ENCODE measurements at regions of chr11 and their contacts with region 1.

Region 1: GRCh38 chr11:17650127-17650911 is 69.1 kb upstream of the MYOD1 start:
- DNase-seq: no peak
- H3K4me3 ChIP-seq: no peak overlapping the region
- H3K27ac ChIP-seq: no peak overlapping the region
- H3K4me1 ChIP-seq: no peaks in the 10 kb centered on the region
- H3K27me3 ChIP-seq: no peaks in the 10 kb centered on the region
- CTCF ChIP-seq: no peak

Region 2: GRCh38 chr11:17154409-17155159 is 495.7 kb before region 1 on chr11:
- CTCF ChIA-PET with region 1: no interaction called
- dilution Hi-C with region 1: no loop called
- in situ Hi-C with region 1: no loop called
- intact Hi-C with region 1: no loop called
- DNase-seq: no peak
- H3K4me3 ChIP-seq: no peak overlapping the region
- H3K27ac ChIP-seq: no peak overlapping the region
- H3K4me1 ChIP-seq: no peaks in the 10 kb centered on the region
- H3K27me3 ChIP-seq: no peaks in the 10 kb centered on the region
- CTCF ChIP-seq: no peak

Region 3: DNA sequence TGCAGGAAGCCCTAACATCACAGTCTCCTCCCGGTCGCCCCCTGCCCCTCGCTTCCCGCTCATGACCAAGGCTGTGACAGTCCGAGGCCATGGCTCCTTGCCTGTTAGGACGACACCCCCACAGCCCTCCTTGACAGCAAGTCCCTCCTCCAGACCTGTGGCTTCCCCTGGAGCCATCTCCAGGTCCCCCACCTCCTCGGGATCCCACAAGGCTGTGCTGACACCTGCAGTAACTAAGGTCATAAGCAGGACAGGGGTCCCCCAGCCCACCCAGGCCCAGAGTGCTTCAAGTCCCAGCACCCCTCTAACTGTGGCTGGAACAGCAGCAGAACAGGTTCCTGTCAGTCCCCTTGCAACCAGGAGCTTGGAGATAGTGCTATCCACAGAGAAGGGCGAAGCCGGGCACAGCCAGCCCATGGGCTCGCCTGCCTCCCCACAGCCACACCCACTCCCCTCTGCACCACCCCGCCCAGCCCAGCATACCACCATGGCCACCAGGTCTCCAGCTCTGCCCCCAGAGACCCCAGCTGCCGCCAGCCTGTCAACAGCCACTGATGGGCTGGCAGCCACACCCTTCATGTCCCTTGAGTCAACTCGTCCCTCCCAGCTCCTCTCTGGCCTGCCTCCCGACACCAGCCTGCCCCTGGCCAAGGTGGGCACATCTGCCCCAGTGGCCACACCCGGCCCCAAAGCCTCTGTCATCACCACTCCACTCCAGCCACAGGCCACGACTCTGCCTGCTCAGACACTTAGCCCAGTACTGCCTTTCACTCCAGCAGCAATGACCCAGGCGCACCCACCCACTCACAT is 40.0 kb before region 1 on chr11:
- CTCF ChIA-PET with region 1: no interaction called
- dilution Hi-C with region 1: loop called (anchors 5 kb)
- in situ Hi-C with region 1: no loop called
- intact Hi-C with region 1: no loop called
- DNase-seq: no peak
- H3K4me3 ChIP-seq: no peak overlapping the region
- H3K27ac ChIP-seq: no peak overlapping the region
- H3K4me1 ChIP-seq: no peaks in the 10 kb centered on the region
- H3K27me3 ChIP-seq: no peaks in the 10 kb centered on the region
- CTCF ChIP-seq: no peak

Measured in mammary epithelial cell (primary cell).